Sciatic nerve (tissue), 2 donors: ENCODE measurements at regions of chr2 and their contacts with region 1.

Region 1: DNA sequence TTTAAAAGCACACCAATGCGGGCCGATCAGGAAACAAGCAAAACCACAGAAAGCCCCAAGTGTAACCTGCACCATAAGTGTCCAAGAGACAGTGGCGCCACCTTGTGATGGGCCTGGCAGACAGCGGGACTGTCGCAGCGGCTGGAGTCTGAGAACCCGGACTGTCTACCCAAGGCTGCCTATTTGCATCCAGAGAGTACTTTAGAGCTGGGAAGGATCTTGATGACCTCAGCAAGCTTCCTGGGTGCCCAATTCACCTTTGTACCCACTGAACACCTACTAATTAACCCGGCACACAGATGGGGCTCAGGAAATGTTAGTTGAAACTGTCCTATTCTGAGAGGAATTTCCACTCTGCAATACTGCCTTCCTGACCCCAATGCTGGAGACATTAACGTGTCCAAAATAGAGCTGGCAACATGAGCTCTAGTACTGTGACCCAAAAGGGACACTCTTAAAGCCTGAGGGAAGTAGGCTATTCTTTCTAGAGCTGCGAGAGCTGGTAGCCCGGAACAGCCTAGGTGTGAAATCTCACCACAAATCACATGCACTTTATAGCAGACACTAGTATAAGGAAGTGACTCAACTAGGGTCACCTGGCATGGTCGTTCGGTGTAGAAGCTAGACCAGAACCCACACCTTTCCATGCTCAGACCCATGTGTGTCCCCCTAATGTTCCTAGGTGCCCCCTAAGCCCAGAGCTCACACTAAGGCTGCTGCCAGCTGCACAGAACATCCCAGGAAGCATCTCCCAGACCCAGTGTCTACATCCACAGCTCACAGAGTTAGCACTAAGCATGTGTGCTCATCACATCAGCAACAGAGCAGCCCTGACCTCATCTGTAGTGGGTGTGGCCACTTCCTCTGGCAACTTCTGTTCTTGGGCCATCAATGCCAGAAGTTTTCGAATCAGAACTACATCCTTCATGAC is 25.4 kb downstream of the POLR1A start:
- DNase-seq: peak; percentile 91
- ATAC-seq: peak; percentile 89

Region 2: DNA sequence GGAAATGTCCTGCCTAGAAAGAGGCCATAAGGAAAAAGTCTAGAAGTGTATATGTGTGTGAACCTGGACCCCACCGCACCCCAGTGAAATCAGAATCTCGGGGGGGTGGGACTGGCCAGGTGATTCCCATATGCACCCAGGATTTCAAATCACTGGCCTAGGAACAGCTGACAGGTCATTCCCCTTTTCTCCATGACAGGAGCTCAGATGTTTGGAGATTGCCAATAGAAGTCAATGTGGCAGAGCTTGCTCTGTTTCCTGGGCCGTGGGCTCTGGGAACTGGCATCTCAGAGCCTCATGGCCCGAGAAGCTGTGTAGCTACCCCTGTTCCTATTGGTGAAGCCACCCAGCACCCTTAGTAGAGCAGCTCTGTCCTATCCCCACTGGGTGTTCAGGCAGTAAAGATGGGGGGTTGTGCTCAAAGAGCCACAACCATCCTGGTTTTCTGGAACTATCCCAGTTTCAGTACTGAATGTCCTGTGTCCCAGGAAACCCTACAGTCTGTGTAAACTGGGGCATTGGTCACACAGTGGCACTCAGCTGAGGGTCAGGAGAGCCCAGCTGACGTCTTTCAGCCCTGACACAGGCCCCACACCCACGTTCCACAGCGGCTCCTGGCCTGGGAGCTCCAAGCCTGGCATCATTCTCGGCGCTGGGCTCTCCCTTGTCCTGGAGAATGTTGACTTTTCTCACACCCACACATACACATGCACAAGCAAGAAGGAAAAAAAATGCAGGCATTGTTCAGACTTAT is 367.2 kb before region 1 on chr2:
- intact Hi-C with region 1: loop called (anchors 10 kb)
- DNase-seq: no peak
- ATAC-seq: peak; percentile 70

Region 3: GRCh38 chr2:85826990-85827878 is 253.0 kb before region 1 on chr2:
- intact Hi-C with region 1: loop called (anchors 2 kb)
- DNase-seq: peak; percentile 89
- ATAC-seq: peak; percentile 96

Region 4: DNA sequence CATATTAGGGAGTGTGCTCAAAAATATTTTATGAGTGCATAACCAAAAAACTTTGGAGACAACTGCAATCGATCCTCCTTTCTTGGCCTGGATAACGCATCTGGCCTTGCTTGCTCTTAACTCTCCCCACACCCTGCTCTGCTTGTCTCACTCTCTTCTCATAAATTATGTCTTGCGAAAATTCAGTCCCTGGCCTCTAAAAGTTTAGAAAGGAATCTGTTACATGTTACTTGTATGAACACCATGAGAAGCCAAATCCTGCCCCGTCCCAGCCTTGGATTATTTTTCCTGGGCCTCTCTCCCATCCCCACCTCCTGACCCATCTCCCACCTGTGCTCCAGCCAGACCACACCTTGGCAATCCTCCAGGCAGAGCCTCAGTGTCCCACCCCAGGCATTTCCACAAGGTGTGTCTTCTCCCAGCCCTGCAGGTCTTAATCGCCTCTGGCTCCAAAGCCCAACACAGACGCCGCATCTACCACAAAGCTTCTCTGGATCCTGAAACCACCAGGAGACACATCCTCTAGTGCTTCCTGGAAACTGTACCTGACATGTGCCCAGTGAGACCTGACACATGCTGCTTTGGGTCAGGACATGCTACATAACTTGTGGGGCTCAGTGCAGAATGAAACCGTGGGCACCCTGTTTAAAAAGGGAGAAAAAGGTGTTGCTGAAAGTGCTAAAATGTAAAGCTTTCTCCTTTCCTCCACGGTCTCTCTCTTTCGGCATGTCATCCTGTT is 91.9 kb before region 1 on chr2:
- intact Hi-C with region 1: no loop called
- DNase-seq: no peak
- ATAC-seq: peak; percentile 88